HepG2 (cell line): ENCODE measurements at regions of chr4 and their contacts with region 1.

Region 1: DNA sequence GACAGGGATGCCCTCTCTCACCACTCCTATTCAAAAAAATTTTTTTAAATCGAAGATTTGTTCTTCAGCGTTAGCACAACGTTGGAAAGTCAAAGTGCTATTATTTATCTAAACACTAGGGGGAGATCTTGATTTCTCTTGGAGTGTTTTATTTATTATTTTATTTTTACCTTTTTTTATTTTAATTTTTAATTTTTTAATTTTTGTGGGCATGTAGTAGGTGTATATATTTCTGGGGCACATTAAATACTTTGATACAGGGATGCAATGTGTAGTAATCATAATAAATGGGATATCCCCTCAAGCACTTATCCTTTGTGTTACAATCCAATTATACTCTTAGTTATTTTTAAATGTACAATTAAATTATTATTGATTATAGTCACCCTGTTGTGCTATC is 37.4 kb upstream of the SLC10A4 start:
- DNase-seq: no peak
- ATAC-seq: no peak
- H3K4me3 ChIP-seq: no peak overlapping the region
- H3K27ac ChIP-seq: no peak overlapping the region
- H3K4me1 ChIP-seq: 0 out of 2 replicates have a peak, but pooled peaks cover 10% of the 10 kb centered on the region
- H3K27me3 ChIP-seq: no peaks in the 10 kb centered on the region
- CTCF ChIP-seq: no peak
- EP300 ChIP-seq: no peak
- POLR2A ChIP-seq: no peak
- RAD21 ChIP-seq: no peak

Region 2: GRCh38 chr4:48300004-48300403 is 145.7 kb before region 1 on chr4:
- CTCF ChIA-PET with region 1: no interaction called
- POLR2A ChIA-PET with region 1: no interaction called
- in situ Hi-C with region 1: no loop called
- intact Hi-C with region 1: no loop called
- DNase-seq: no peak
- ATAC-seq: no peak
- H3K4me3 ChIP-seq: no peak overlapping the region
- H3K27ac ChIP-seq: no peak overlapping the region
- H3K4me1 ChIP-seq: no peaks in the 10 kb centered on the region
- H3K27me3 ChIP-seq: no peaks in the 10 kb centered on the region
- CTCF ChIP-seq: no peak
- EP300 ChIP-seq: no peak
- POLR2A ChIP-seq: no peak
- RAD21 ChIP-seq: no peak

Region 3: GRCh38 chr4:48315728-48316630 is 129.7 kb before region 1 on chr4:
- CTCF ChIA-PET with region 1: no interaction called
- POLR2A ChIA-PET with region 1: no interaction called
- in situ Hi-C with region 1: no loop called
- intact Hi-C with region 1: no loop called
- DNase-seq: peak; percentile 54
- ATAC-seq: peak; percentile 80
- H3K4me3 ChIP-seq: no peak overlapping the region
- H3K27ac ChIP-seq: no peak overlapping the region
- H3K4me1 ChIP-seq: no peaks in the 10 kb centered on the region
- H3K27me3 ChIP-seq: no peaks in the 10 kb centered on the region; a peak in 1 of 5 replicates
- CTCF ChIP-seq: peak; percentile 83
- EP300 ChIP-seq: no peak
- POLR2A ChIP-seq: no peak
- RAD21 ChIP-seq: peak; percentile 60

Region 4: DNA sequence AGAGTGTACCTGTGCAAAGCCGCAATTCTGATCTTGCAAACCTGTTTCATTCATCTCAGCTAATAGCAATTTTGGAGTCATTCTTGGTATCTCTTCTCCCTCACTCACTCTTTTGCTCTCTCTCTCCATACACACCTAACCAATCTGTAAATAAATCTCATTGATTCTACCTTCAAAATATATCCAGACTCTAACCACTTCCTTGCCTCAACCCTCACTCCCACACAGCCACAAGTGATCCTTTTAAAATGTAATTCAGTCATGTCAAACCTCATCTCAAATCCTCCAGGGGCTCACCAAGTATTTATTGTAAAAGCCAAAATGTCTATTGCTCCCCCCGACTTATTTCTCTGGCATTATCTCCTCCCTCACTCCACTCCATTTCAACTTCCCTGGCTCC is 14.3 kb before region 1 on chr4:
- CTCF ChIA-PET with region 1: no interaction called
- POLR2A ChIA-PET with region 1: no interaction called
- in situ Hi-C with region 1: no loop called
- intact Hi-C with region 1: no loop called
- DNase-seq: no peak
- ATAC-seq: no peak
- H3K4me3 ChIP-seq: no peak overlapping the region
- H3K27ac ChIP-seq: no peak overlapping the region
- H3K4me1 ChIP-seq: no peaks in the 10 kb centered on the region
- H3K27me3 ChIP-seq: no peaks in the 10 kb centered on the region
- CTCF ChIP-seq: no peak
- EP300 ChIP-seq: no peak
- POLR2A ChIP-seq: no peak
- RAD21 ChIP-seq: no peak

Region 5: GRCh38 chr4:48546336-48546735 is 100.6 kb after region 1 on chr4:
- CTCF ChIA-PET with region 1: interaction called, 5 read pairs
- POLR2A ChIA-PET with region 1: no interaction called
- in situ Hi-C with region 1: loop called (anchors 10 kb)
- intact Hi-C with region 1: loop called (anchors 2 kb)
- DNase-seq: peak; percentile 34
- ATAC-seq: no peak
- H3K4me3 ChIP-seq: no peak overlapping the region
- H3K27ac ChIP-seq: no peak overlapping the region
- H3K4me1 ChIP-seq: no peaks in the 10 kb centered on the region
- H3K27me3 ChIP-seq: no peaks in the 10 kb centered on the region
- CTCF ChIP-seq: peak; percentile 75
- EP300 ChIP-seq: no peak
- POLR2A ChIP-seq: no peak
- RAD21 ChIP-seq: peak; percentile 33; the same call in 1 of the 2 replicates

Region 6: DNA sequence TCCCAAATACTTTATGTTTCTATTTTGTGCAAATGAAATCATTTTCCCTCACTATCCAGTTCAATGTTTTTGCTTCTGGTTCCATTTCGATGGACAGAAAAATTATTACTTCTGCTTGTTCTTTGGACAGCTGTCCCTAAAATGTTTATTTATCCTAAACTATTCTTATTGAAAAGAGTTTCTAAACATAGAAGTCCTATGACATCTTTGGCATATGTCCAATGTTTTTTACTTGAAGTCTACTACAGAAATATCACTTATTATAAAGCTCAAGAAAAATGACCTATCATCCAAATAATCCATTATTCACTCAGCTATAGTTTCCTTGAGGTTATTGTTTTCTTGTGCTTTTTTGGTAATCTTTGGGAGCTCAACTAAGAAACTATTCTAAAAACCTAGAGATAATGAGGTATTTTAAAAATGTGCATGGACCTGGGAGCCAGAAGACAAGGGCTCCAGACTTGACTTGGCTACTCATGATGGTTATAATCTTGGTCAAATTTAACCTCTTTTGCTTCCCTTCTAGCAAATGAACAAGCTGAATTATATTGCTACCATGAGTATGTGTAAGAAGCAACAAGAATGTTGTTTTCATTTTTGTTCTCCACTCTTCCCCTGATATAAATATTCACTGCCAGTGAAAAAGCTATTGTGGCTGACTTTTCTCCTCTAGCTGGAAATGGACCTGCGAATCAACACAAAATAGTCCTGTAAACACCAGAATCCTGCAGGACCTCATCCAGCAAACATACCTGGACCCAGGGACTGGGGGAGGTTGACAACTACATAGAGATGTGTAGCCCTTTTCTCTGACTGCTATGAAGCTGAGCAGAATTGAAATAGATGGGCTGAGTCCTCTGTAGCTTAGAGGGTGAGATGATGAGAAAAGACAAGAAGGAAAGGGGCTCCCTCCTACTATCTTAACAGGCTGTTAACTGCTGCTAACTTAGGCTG is 197.0 kb after region 1 on chr4:
- CTCF ChIA-PET with region 1: no interaction called
- POLR2A ChIA-PET with region 1: no interaction called
- in situ Hi-C with region 1: no loop called
- intact Hi-C with region 1: no loop called
- DNase-seq: no peak
- ATAC-seq: no peak
- H3K4me3 ChIP-seq: no peak overlapping the region
- H3K27ac ChIP-seq: no peak overlapping the region
- H3K4me1 ChIP-seq: no peaks in the 10 kb centered on the region
- H3K27me3 ChIP-seq: no peaks in the 10 kb centered on the region
- CTCF ChIP-seq: no peak
- EP300 ChIP-seq: no peak
- POLR2A ChIP-seq: no peak
- RAD21 ChIP-seq: no peak

Region 7: GRCh38 chr4:48963042-48963679 is 517.5 kb after region 1 on chr4:
- CTCF ChIA-PET with region 1: interaction called, 5 read pairs
- POLR2A ChIA-PET with region 1: no interaction called
- in situ Hi-C with region 1: no loop called
- intact Hi-C with region 1: loop called (anchors 10 kb)
- DNase-seq: peak; percentile 82
- ATAC-seq: peak; percentile 95
- H3K4me3 ChIP-seq: no peak overlapping the region
- H3K27ac ChIP-seq: no peak overlapping the region
- H3K4me1 ChIP-seq: no peaks in the 10 kb centered on the region
- H3K27me3 ChIP-seq: no peaks in the 10 kb centered on the region
- CTCF ChIP-seq: peak; percentile 89
- EP300 ChIP-seq: no peak
- POLR2A ChIP-seq: no peak
- RAD21 ChIP-seq: peak; percentile 81